T-cell (primary cell): ENCODE measurements at regions of chr21 and their contacts with region 1.

Region 1: DNA sequence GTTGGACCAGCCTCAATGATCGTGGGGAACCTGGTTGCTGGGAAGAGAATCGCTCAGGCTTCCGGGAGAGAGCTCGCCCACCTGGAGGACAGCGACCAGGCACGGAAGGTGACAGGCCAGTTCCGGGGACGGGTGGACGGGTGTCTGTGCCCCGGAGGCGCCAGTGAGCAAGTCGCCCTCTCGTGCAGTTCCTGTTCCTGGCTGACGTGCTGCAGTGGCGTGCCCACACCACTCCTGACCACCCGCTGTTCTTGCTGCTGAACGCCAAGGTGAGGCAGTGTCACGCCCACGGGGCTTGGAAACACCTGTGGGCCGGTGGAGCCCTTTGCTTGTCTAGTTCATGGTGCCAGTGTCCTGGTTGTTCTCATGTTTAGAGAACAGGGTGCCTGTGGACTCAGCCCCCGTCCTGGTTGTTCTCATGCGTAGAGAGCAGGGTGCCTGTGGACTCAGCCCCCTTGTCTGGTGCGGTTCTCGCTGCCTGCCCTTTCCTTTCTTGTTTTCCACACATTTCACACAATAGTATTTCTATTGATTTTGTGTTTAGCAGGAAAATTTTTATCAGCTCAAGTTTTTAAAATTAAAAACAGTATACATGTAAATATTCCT is 53.1 kb downstream of the S100B start:
- DNase-seq: peak in 30 of 35 experiments; percentile 6 to 57 (median 31)
- ATAC-seq: peak; percentile 9 to 26 (median 22)
- H3K4me3 ChIP-seq: peak overlapping the region in 1 of 2 donors; percentile 14
- H3K4me3 Mint-ChIP-seq: peak overlapping the region; percentile 57 to 84 (median 72)
- H3K27ac ChIP-seq: peak overlapping the region; percentile 85
- H3K27ac Mint-ChIP-seq: peak overlapping the region; percentile 97 to 99
- H3K4me1 ChIP-seq: peaks cover 50 to 69% of the 10 kb centered on the region in 2 experiments
- H3K4me1 Mint-ChIP-seq: peaks cover 77 to 82% (median 78%) of the 10 kb centered on the region in 3 donors
- H3K27me3 ChIP-seq: no peaks in the 10 kb centered on the region
- H3K27me3 Mint-ChIP-seq: no peaks in the 10 kb centered on the region

Region 2: DNA sequence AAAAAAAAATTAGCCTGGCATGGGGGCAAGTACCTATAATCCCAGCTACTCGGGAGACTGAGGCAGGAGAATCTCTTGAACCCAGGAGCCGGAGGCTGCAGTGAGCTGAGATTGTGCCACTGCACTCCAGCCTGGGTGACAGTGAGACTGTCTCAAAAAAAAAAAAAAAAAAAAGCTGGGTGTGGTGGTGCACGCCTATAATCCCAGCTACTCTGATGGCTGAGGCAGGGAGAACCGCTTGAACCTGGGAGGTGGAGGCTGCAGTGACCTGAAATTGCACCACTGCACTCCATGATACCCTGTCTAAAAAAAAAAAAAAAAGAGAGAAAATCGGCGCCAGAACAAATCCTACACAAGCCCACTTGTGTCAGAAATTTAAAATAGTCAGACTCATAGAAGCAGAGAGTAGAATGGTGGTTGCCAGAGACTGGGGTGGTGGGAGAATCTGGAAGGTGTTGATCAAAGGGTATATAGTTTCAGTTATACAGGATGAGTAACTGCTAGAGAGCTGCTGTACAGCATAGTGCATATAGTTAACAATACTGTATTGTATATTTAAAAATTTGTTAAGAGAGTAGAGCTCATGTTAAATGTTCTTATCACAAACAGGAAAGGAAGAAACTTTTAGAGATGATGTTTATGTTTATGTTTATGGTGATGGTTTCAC is 83.5 kb before region 1 on chr21:
- CTCF ChIA-PET with region 1: no interaction called
- POLR2A ChIA-PET with region 1: interaction called in 1 of 2 experiments, 16 read pairs
- DNase-seq: no peak
- ATAC-seq: no peak
- H3K4me3 ChIP-seq: no peak overlapping the region
- H3K4me3 Mint-ChIP-seq: no peak overlapping the region
- H3K27ac ChIP-seq: no peak overlapping the region
- H3K27ac Mint-ChIP-seq: peak overlapping the region; percentile 58 to 75
- H3K4me1 ChIP-seq: peaks cover 5 to 17% of the 10 kb centered on the region in 2 experiments
- H3K4me1 Mint-ChIP-seq: peaks cover 47 to 48% (median 47%) of the 10 kb centered on the region in 3 donors
- H3K27me3 ChIP-seq: no peaks in the 10 kb centered on the region
- H3K27me3 Mint-ChIP-seq: no peaks in the 10 kb centered on the region